Stomach (tissue), 19 donors: ENCODE measurements at regions of chr6 and their contacts with region 1.

Region 1: DNA sequence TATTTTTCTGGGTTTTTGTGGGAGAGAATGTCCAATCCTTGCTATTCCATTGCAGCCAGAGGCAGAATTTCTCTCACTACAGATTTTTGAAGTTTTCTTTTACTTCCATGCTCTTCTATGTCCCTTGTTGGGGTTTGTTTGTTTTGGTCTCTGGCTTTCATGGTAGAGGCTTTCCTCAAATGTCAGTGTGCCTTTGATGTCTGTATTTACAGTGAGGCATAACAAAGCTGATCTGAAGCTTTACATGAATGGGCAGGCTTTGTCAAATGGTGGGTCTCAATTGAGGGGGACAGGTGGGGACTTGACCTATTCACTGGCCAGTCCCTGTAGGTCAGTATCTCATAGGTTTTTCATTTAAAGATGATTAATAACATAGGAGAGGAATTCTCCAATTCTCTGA is 8.6 kb upstream of the CARMIL1 start:
- DNase-seq: no peak
- H3K4me3 ChIP-seq: no peak overlapping the region
- H3K27ac ChIP-seq: no peak overlapping the region
- H3K4me1 ChIP-seq: no peaks in the 10 kb centered on the region
- H3K27me3 ChIP-seq: no peaks in the 10 kb centered on the region
- CTCF ChIP-seq: no peak
- EP300 ChIP-seq: no peak
- POLR2A ChIP-seq: no peak

Region 2: DNA sequence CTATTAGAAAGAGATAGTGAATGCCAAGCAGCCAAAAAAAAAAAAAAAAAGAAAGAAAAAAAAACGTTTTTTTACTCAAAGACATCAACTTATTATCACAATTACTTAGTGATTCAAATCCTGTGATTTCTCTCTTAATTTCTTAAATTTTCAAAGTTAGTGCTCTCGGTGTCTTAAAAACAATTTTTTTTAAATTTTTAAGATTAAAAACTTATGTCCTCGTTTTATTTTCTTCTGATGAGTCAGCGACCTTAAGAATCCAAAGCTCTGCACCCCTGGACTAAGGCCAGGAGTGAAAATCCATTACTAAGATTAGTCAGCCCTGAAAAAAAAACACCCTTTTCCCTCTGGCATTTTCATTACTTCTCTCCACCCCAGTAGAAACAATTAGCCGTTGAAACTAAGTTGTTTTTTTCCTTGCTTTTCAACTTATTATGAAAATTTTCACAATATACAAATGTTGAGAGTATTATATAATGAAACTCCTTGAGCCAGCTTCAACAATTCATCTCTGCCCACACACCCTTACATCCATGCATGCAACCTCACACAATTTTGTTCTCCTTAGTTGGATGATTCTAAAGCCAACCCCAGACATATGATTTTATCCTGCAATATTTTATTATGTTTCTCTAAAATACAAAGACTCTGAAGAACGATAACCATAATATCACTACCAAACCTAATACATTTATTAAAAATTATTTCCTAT is 76.9 kb before region 1 on chr6:
- intact Hi-C with region 1: no loop called
- DNase-seq: peak in 1 of 2 donors; percentile 74
- H3K4me3 ChIP-seq: no peak overlapping the region
- H3K27ac ChIP-seq: peak overlapping the region in 4 of 5 donors; percentile 56 to 75 (median 69)
- H3K4me1 ChIP-seq: peaks cover 0 to 13% (median 6%) of the 10 kb centered on the region in 4 donors
- H3K27me3 ChIP-seq: no peaks in the 10 kb centered on the region
- CTCF ChIP-seq: no peak
- EP300 ChIP-seq: no peak
- POLR2A ChIP-seq: no peak

Region 3: GRCh38 chr6:25485821-25486534 is 215.4 kb after region 1 on chr6:
- intact Hi-C with region 1: loop called (anchors 5 kb)
- DNase-seq: peak; percentile 37 to 67
- H3K4me3 ChIP-seq: no peak overlapping the region
- H3K27ac ChIP-seq: no peak overlapping the region
- H3K4me1 ChIP-seq: peaks cover 5 to 18% (median 11%) of the 10 kb centered on the region in 4 donors
- H3K27me3 ChIP-seq: no peaks in the 10 kb centered on the region
- CTCF ChIP-seq: no peak
- EP300 ChIP-seq: no peak
- POLR2A ChIP-seq: no peak